ENCODE measurements at regions of chrX and their contacts with region 1.

Region 1: DNA sequence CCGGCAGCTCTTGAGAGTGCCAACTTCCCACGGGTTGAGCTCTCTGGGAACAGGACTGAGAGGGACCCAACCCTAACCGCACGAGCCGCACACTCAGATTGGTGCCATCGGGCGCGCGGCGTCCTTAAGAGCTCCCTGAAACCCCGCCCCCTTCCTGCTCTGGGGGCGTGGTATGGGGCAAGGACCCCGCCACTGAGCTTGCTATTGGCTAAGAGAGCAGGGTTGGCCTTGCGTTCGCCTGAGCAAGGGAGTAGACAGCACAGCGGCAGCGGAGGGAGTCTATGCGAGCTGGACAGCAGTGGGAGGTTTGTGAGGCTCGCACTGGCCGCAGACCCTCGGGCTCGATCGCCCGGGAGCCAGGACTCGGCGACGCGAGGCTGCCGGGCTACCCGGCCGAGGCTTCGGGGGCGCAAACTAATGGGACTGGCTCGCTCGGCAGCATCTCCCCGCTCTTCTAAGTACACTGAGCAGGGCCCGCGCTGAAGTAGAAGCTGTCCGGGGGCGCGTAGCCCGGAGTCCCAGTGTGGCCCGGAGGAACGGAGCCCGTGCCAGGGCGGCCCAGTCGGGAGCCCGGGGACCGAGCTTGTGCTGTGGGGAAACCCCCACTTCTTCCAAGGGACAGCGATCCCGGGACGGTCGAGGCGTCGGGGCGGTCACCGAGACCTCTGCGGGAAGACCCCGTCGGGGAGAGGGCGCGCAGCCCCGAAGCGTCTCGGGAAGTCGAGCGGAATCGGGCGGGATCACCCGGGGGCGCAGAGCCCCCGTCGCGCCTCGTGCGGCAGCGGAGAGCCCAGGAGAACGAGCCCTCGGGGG is at the start of gene EFNB1:
- DNase-seq: peak; percentile 91
- H3K4me3 Mint-ChIP-seq: peak within 1 kb of the TSS; percentile 87
- H3K27ac Mint-ChIP-seq: peak within 1 kb of the TSS; percentile 85
- H3K4me1 Mint-ChIP-seq: peaks cover 37% of the 10 kb centered on the region
- H3K27me3 Mint-ChIP-seq: peaks cover 23% of the 10 kb centered on the region
- CTCF ChIP-seq: no peak
- total RNA-seq, gene EFNB1: 12.6 and 20.7 TPM in 2 replicates

Region 2: DNA sequence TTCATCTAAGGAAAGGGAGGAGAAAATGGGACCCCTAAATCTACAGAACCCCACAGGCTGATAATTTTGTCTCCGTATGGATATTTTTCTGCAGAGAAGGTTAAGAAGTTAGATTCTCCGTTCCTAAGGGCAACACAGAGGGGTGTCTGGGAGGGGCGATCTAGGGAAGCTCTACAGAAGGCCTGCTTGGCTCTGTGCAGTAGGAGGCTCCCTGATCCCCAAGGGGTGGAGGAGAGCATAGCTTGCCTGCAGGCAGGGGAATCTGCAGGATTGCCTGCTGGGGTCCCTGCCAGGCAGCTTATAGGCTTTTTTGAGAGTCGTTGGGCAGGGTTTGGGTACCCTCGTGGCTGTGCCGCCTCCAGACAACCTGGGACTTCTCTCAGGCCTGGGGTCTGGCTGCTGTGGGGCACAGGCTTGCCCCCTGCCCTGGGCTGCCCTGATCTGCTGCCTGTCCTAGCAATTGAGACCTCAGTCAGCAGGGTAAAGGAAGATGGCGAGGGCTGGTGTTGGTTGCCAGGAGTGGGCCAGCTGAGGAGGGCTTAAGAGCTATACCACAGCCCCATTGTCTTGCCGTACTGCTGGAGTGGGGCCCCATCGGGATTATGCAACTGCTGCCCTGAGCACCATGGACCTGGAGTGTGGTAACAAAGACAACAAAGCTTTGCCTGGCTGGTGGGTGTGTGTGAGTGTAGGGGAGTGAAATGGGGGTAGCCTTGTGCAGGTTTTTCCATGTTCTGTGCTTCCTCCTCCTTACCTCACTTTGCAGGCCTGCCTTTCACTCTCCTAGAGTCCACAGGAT is 74.0 kb after region 1 on chrX:
- CTCF ChIA-PET with region 1: no interaction called
- intact Hi-C with region 1: no loop called
- DNase-seq: no peak
- H3K4me3 Mint-ChIP-seq: no peak overlapping the region
- H3K27ac Mint-ChIP-seq: no peak overlapping the region
- H3K4me1 Mint-ChIP-seq: no peaks in the 10 kb centered on the region
- H3K27me3 Mint-ChIP-seq: no peaks in the 10 kb centered on the region
- CTCF ChIP-seq: no peak

Region 3: GRCh38 chrX:68915778-68916177 is 86.8 kb after region 1 on chrX:
- CTCF ChIA-PET with region 1: no interaction called
- intact Hi-C with region 1: loop called (anchors 5 kb)
- DNase-seq: no peak
- H3K4me3 Mint-ChIP-seq: no peak overlapping the region
- H3K27ac Mint-ChIP-seq: no peak overlapping the region
- H3K4me1 Mint-ChIP-seq: no peaks in the 10 kb centered on the region
- H3K27me3 Mint-ChIP-seq: no peaks in the 10 kb centered on the region
- CTCF ChIP-seq: no peak

Region 4: DNA sequence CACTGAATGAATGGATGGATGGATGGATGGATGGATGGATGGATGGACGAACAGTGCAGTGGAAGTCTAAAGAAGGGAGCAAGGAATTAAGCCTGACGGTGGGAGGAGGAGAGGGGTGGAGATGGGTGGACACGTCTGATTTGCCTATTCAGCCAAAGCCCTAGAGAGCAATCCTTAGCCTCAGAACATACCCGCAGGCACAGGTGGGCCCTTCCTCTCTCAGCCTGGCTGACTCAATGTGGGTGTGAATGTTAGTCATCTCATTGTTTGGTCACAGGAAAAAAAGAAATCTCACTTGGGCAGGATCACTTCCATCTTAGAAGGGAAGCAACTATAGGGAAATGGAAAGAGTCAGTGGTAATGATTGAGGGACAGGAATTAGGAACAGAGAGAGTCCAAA is 170.4 kb after region 1 on chrX:
- CTCF ChIA-PET with region 1: no interaction called
- intact Hi-C with region 1: no loop called
- DNase-seq: peak; percentile 28
- H3K4me3 Mint-ChIP-seq: no peak overlapping the region
- H3K27ac Mint-ChIP-seq: no peak overlapping the region
- H3K4me1 Mint-ChIP-seq: peaks cover 17% of the 10 kb centered on the region
- H3K27me3 Mint-ChIP-seq: no peaks in the 10 kb centered on the region
- CTCF ChIP-seq: no peak

Region 5: DNA sequence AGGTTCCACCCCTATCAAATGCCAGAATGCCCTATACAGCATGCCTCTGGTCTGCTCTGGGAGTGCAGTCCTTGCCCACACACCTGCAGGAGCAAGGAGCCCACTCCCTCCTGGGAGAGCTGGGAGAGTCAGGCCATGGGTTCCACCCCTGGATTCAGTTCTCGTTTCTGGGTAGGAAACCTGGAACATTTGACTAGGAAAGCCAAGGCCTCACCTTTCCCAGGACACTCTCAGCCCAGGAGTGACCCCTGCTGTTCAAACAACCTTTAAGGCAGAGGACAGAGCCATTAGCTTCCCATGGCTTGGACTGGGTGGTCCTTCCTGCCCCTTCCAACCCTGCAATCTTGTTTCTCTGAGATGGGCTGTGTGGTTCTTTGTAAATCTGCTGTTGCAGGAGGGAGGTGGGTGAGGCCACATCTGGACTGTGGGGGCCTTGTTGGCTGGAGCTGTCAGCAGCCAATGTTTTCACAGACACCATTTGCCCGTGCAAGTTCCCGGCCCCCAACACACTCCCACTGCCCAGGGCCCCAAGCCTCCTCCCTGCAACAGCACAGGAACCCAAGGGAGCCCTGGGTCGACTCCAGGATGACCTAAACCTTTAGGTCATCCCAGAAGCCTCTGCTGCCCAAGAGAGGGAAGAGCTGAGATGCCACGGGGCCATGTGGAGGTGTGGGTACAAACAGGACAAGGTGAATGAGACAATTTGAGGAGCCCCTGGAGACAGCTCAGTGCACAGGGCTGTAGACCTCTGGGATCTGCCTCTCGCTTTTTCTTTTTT is 231.9 kb after region 1 on chrX:
- CTCF ChIA-PET with region 1: interaction called, 45 read pairs
- intact Hi-C with region 1: loop called (anchors 1 kb)
- DNase-seq: peak; percentile 53
- H3K4me3 Mint-ChIP-seq: no peak overlapping the region
- H3K27ac Mint-ChIP-seq: no peak overlapping the region
- H3K4me1 Mint-ChIP-seq: no peaks in the 10 kb centered on the region
- H3K27me3 Mint-ChIP-seq: peaks cover 13% of the 10 kb centered on the region
- CTCF ChIP-seq: no peak

Region 6: DNA sequence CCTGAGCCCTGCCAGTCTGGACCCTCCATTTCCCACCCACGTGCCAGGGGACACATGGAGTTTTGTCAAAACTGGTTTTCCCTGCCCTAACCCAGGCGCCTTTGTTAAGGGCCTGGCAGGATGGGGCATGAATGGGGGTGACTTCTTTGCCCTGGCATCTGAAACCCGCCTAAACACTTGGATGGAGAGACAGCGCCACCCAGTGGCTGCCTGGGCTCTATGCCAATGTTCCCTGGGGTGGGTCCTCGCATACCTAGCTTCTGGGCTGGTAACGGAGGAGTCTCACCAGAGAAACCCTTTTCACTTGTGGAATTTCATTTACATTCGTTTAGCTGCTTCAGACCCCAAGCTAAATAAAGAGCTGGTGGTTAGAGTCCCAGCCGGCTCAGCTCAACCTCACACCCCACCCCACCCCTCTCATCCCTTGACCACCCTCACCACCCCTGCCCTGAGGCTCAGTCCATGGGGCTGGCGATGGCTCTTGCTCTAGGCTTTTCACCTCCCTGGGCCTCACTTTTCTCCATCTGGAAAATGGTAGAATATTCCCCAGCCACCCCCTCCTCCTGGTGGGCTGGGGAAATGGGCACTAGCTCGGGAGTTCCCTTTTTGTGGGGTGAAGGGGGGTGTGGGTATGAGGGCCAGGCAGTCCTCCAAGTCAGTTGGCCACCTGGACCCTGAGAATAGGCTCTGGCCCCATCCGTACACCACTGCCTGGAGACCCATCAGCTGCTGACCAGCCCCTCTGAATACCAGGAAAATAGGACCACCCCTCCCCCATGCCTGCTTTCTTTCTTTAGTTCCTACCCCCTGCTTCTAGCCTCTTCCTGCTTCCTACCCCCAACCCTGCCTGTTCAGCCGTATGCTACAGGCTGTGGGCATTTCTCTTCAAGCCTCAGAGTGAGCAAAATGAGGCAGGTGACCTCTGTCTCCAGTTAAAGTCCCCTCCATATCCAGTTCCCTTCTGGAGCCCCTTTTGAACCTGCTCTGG is 393.5 kb after region 1 on chrX:
- CTCF ChIA-PET with region 1: interaction called, 18 read pairs
- intact Hi-C with region 1: loop called (anchors 1 kb)
- DNase-seq: peak; percentile 79
- H3K4me3 Mint-ChIP-seq: no peak overlapping the region
- H3K27ac Mint-ChIP-seq: no peak overlapping the region
- H3K4me1 Mint-ChIP-seq: no peaks in the 10 kb centered on the region
- H3K27me3 Mint-ChIP-seq: no peaks in the 10 kb centered on the region
- CTCF ChIP-seq: peak; percentile 76